Calu3 (cell line): ENCODE measurements at regions of chr1 and their contacts with region 1.

Region 1: DNA sequence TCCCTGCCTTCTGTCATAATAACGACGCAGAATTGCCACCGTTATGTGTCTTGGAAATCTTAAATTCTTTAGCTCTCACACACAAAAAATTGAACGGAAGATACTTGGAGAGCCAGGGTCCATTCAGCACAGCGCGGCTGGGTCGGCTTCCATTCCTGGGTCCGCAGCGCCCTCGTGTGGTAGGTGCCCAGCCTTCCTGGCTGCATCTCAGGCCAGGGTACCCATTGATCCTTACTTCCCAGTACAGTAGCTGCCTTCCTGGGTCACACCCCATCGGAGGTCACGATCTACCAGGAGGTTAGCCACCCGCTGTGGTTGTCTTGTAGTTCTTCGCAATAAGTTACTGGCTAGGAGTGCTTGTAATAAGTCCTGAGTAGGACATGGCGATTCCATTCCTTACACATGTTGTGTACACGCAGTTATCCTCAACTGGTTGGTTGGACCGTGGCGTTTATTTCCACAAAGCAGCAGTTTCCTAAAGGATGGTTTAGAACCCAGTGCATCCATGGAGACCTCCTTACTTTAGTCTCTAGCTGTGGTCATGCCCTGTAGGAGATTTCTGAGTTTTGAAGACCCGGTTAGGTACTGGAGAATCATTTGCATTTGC is 9.9 kb upstream of the MTARC1 start:
- DNase-seq: peak; percentile 93
- H3K4me3 Mint-ChIP-seq: no peak overlapping the region
- H3K27ac Mint-ChIP-seq: no peak overlapping the region
- H3K4me1 Mint-ChIP-seq: no peaks in the 10 kb centered on the region
- H3K27me3 Mint-ChIP-seq: no peaks in the 10 kb centered on the region
- CTCF ChIP-seq: peak; percentile 89

Region 2: GRCh38 chr1:220217383-220217988 is 559.3 kb before region 1 on chr1:
- CTCF ChIA-PET with region 1: interaction called, 11 read pairs
- intact Hi-C with region 1: loop called (anchors 2 kb)
- DNase-seq: peak; percentile 44
- H3K4me3 Mint-ChIP-seq: no peak overlapping the region
- H3K27ac Mint-ChIP-seq: no peak overlapping the region
- H3K4me1 Mint-ChIP-seq: no peaks in the 10 kb centered on the region
- H3K27me3 Mint-ChIP-seq: no peaks in the 10 kb centered on the region
- CTCF ChIP-seq: no peak

Region 3: GRCh38 chr1:220294846-220295301 is 481.9 kb before region 1 on chr1:
- CTCF ChIA-PET with region 1: interaction called, 12 read pairs
- intact Hi-C with region 1: loop called (anchors 1 kb)
- DNase-seq: no peak
- H3K4me3 Mint-ChIP-seq: no peak overlapping the region
- H3K27ac Mint-ChIP-seq: no peak overlapping the region
- H3K4me1 Mint-ChIP-seq: no peaks in the 10 kb centered on the region
- H3K27me3 Mint-ChIP-seq: peaks cover 10% of the 10 kb centered on the region
- CTCF ChIP-seq: no peak

Region 4: GRCh38 chr1:220680085-220680687 is 96.6 kb before region 1 on chr1:
- CTCF ChIA-PET with region 1: interaction called, 5 read pairs
- intact Hi-C with region 1: loop called (anchors 1 kb)
- DNase-seq: peak; percentile 37
- H3K4me3 Mint-ChIP-seq: no peak overlapping the region
- H3K27ac Mint-ChIP-seq: no peak overlapping the region
- H3K4me1 Mint-ChIP-seq: peaks cover 8% of the 10 kb centered on the region
- H3K27me3 Mint-ChIP-seq: no peaks in the 10 kb centered on the region
- CTCF ChIP-seq: peak; percentile 79